ENCODE measurements at regions of chr12 and their contacts with region 1.

Region 1: DNA sequence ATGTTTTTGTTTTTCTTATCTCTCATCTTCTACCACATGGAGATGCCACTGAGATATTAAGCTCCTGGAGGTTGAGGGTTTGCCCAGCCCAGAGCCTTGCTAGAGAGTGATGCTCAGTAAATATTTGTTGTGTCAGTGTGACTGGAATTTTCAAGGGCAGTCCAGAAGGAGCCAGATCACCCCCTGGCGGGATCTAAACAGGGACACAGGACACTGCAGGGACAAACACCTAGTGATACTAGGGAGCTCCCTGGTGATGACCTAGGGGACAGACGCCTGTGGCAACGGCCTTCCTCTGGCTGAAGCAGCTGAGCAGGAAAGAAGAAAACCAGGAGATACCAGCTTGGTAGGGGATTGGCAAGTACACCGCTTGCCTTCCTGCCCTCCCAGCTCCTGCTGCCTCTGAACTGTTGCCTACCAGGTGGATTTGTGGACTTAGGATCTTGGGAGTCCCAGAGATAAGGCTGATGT is 714.4 kb upstream of the TBX3 start:
- DNase-seq: peak; percentile 92
- ATAC-seq: peak; percentile 100
- H3K4me3 ChIP-seq: no peak overlapping the region
- H3K27ac ChIP-seq: peak overlapping the region; percentile 30
- H3K4me1 ChIP-seq: peaks cover 57% of the 10 kb centered on the region
- H3K27me3 ChIP-seq: no peaks in the 10 kb centered on the region
- CTCF ChIP-seq: peak; percentile 96
- EP300 ChIP-seq: peak in 1 of 2 experiments; percentile 62; a peak in 2 of 4 replicates
- POLR2A ChIP-seq: no peak
- RAD21 ChIP-seq: peak; percentile 97

Region 2: GRCh38 chr12:114933428-114934168 is 464.7 kb before region 1 on chr12:
- CTCF ChIA-PET with region 1: interaction called, 3 read pairs
- POLR2A ChIA-PET with region 1: no interaction called
- in situ Hi-C with region 1: no loop called
- intact Hi-C with region 1: loop called (anchors 10 kb)
- DNase-seq: peak; percentile 46
- ATAC-seq: peak; percentile 71
- H3K4me3 ChIP-seq: no peak overlapping the region
- H3K27ac ChIP-seq: no peak overlapping the region
- H3K4me1 ChIP-seq: no peaks in the 10 kb centered on the region
- H3K27me3 ChIP-seq: no peaks in the 10 kb centered on the region
- CTCF ChIP-seq: no peak
- EP300 ChIP-seq: no peak
- POLR2A ChIP-seq: no peak
- RAD21 ChIP-seq: no peak

Region 3: GRCh38 chr12:115223322-115223721 is 175.0 kb before region 1 on chr12:
- CTCF ChIA-PET with region 1: no interaction called
- POLR2A ChIA-PET with region 1: no interaction called
- in situ Hi-C with region 1: no loop called
- intact Hi-C with region 1: loop called (anchors 5 kb)
- DNase-seq: peak; percentile 14
- ATAC-seq: no peak
- H3K4me3 ChIP-seq: no peak overlapping the region
- H3K27ac ChIP-seq: no peak overlapping the region
- H3K4me1 ChIP-seq: peaks cover 23% of the 10 kb centered on the region
- H3K27me3 ChIP-seq: peaks cover 2 to 3% of the 10 kb centered on the region in 2 experiments; a peak in 1 of 5 replicates
- CTCF ChIP-seq: no peak
- EP300 ChIP-seq: no peak
- POLR2A ChIP-seq: no peak
- RAD21 ChIP-seq: no peak

Region 4: GRCh38 chr12:115375186-115375991 is 23.0 kb before region 1 on chr12:
- CTCF ChIA-PET with region 1: no interaction called
- POLR2A ChIA-PET with region 1: no interaction called
- in situ Hi-C with region 1: no loop called
- intact Hi-C with region 1: no loop called
- DNase-seq: peak; percentile 28
- ATAC-seq: peak; percentile 58
- H3K4me3 ChIP-seq: peak overlapping the region; percentile 11 to 43 (median 25); a peak in 4 of 6 replicates
- H3K27ac ChIP-seq: no peak overlapping the region
- H3K4me1 ChIP-seq: peaks cover 17% of the 10 kb centered on the region
- H3K27me3 ChIP-seq: peaks cover 0 to 10% of the 10 kb centered on the region in 2 experiments; a peak in 2 of 5 replicates
- CTCF ChIP-seq: no peak
- EP300 ChIP-seq: no peak
- POLR2A ChIP-seq: no peak
- RAD21 ChIP-seq: no peak

Region 5: GRCh38 chr12:115411121-115411520 is 12.8 kb after region 1 on chr12:
- CTCF ChIA-PET with region 1: no interaction called
- POLR2A ChIA-PET with region 1: no interaction called
- in situ Hi-C with region 1: no loop called
- intact Hi-C with region 1: no loop called
- DNase-seq: no peak
- ATAC-seq: no peak
- H3K4me3 ChIP-seq: no peak overlapping the region
- H3K27ac ChIP-seq: no peak overlapping the region
- H3K4me1 ChIP-seq: no peaks in the 10 kb centered on the region
- H3K27me3 ChIP-seq: no peaks in the 10 kb centered on the region
- CTCF ChIP-seq: no peak
- EP300 ChIP-seq: no peak
- POLR2A ChIP-seq: no peak
- RAD21 ChIP-seq: no peak

Region 6: GRCh38 chr12:115468087-115468510 is 69.8 kb after region 1 on chr12:
- CTCF ChIA-PET with region 1: interaction called, 3 read pairs
- POLR2A ChIA-PET with region 1: no interaction called
- in situ Hi-C with region 1: no loop called
- intact Hi-C with region 1: loop called (anchors 2 kb)
- DNase-seq: peak; percentile 88
- ATAC-seq: peak; percentile 100
- H3K4me3 ChIP-seq: peak overlapping the region; percentile 50 to 64 (median 54)
- H3K27ac ChIP-seq: peak overlapping the region; percentile 76
- H3K4me1 ChIP-seq: peaks cover 17% of the 10 kb centered on the region
- H3K27me3 ChIP-seq: no peaks in the 10 kb centered on the region
- CTCF ChIP-seq: peak; percentile 90
- EP300 ChIP-seq: peak in 1 of 2 experiments; percentile 30; a peak in 1 of 4 replicates
- POLR2A ChIP-seq: peak; percentile 21 to 58; a peak in 2 of 4 replicates
- RAD21 ChIP-seq: peak; percentile 82

Region 7: DNA sequence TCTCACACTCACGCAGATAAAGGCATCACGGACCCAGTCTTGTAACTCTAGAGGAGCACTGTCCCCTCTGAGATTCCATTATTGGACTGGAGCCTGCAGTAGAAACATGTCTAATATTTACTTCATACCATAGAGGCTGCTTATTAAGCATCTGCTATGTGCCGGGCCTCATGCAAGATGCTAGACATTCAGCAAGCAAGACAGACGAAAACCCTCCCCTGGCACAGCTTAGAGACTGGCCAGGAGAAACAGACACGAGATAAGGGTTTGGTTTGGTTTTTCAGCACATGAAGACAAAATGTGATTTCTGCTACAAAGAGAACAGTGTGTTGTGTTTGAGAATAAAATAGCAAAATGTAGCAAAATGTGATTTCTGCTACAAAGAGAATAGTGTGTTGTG is 159.9 kb after region 1 on chr12:
- CTCF ChIA-PET with region 1: no interaction called
- POLR2A ChIA-PET with region 1: no interaction called
- in situ Hi-C with region 1: no loop called
- intact Hi-C with region 1: no loop called
- DNase-seq: no peak
- ATAC-seq: no peak
- H3K4me3 ChIP-seq: no peak overlapping the region
- H3K27ac ChIP-seq: no peak overlapping the region
- H3K4me1 ChIP-seq: peaks cover 10% of the 10 kb centered on the region
- H3K27me3 ChIP-seq: peaks cover 2 to 22% of the 10 kb centered on the region in 2 experiments; a peak in 3 of 5 replicates
- CTCF ChIP-seq: no peak
- EP300 ChIP-seq: no peak
- POLR2A ChIP-seq: no peak
- RAD21 ChIP-seq: no peak